Activated CD4-positive, alpha-beta T cell treated with anti-CD3 and anti-CD28 coated beads for 36 hours (primary cell): ENCODE measurements at regions of chr6 and their contacts with region 1.

Region 1: GRCh38 chr6:168895102-168895812 is 358.4 kb downstream of the THBS2 start:
- DNase-seq: peak; percentile 90
- ATAC-seq: peak; percentile 96
- H3K4me3 Mint-ChIP-seq: no peak overlapping the region
- H3K27ac Mint-ChIP-seq: peak overlapping the region; percentile 64
- H3K4me1 Mint-ChIP-seq: peaks cover 10% of the 10 kb centered on the region
- H3K27me3 Mint-ChIP-seq: no peaks in the 10 kb centered on the region

Region 2: GRCh38 chr6:169212897-169213813 is 317.9 kb after region 1 on chr6:
- CTCF ChIA-PET with region 1: no interaction called
- POLR2A ChIA-PET with region 1: no interaction called
- intact Hi-C with region 1: loop called in 1 of 2 experiments (anchors 10 kb)
- DNase-seq: peak; percentile 95
- ATAC-seq: peak; percentile 100
- H3K4me3 Mint-ChIP-seq: peak overlapping the region; percentile 54
- H3K27ac Mint-ChIP-seq: peak overlapping the region; percentile 59
- H3K4me1 Mint-ChIP-seq: peaks cover 16% of the 10 kb centered on the region
- H3K27me3 Mint-ChIP-seq: no peaks in the 10 kb centered on the region

Region 3: GRCh38 chr6:169529931-169530751 is 634.9 kb after region 1 on chr6:
- CTCF ChIA-PET with region 1: no interaction called
- POLR2A ChIA-PET with region 1: no interaction called
- intact Hi-C with region 1: loop called in 1 of 2 experiments (anchors 10 kb)
- DNase-seq: peak; percentile 66
- ATAC-seq: peak; percentile 92
- H3K4me3 Mint-ChIP-seq: no peak overlapping the region
- H3K27ac Mint-ChIP-seq: peak overlapping the region; percentile 61
- H3K4me1 Mint-ChIP-seq: peaks cover 16% of the 10 kb centered on the region
- H3K27me3 Mint-ChIP-seq: no peaks in the 10 kb centered on the region

Region 4: DNA sequence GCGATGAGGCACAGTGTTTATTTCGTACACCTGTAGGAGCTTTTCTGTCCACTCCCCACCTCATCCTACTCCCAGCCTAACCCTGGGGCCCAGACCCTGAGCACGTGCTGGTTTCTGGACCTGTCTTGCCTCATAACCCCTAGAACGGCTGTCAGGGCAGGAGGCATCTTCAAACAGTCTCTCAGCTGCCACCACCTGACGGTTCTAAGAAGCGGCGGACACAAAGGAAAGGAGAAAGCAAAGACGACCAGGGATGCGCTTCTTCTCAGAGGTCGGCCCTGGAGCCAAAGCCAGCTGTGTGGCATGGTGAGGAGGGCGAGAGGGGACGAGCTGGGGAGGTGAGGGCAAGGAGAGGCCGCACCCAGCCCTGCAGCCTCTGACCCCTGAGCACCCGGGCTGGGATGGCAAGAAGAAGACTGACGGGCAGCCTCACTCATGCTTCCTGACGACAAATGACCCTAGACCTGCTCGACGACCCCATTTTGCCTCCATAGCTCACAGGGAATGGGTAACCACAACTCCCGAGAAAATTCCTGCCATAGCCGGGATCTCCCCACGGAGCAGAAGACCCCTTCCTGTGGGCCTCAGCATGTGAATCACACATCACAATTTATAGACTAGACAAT is 744.5 kb after region 1 on chr6:
- CTCF ChIA-PET with region 1: no interaction called
- POLR2A ChIA-PET with region 1: no interaction called
- intact Hi-C with region 1: loop called in 1 of 2 experiments (anchors 5 kb)
- DNase-seq: no peak
- ATAC-seq: no peak
- H3K4me3 Mint-ChIP-seq: no peak overlapping the region
- H3K27ac Mint-ChIP-seq: no peak overlapping the region
- H3K4me1 Mint-ChIP-seq: peaks cover 2% of the 10 kb centered on the region
- H3K27me3 Mint-ChIP-seq: no peaks in the 10 kb centered on the region

Region 5: GRCh38 chr6:169751242-169752073 is 856.2 kb after region 1 on chr6 and contains the starts of genes DYNLT2 and ERMARD:
- CTCF ChIA-PET with region 1: no interaction called
- POLR2A ChIA-PET with region 1: no interaction called
- intact Hi-C with region 1: loop called in 1 of 2 experiments (anchors 10 kb)
- DNase-seq: peak; percentile 96
- ATAC-seq: peak; percentile 96
- H3K4me3 Mint-ChIP-seq: peak within 1 kb of the TSS; percentile 95
- H3K27ac Mint-ChIP-seq: peak within 1 kb of the TSS; percentile 97
- H3K4me1 Mint-ChIP-seq: peaks cover 23% of the 10 kb centered on the region
- H3K27me3 Mint-ChIP-seq: no peaks in the 10 kb centered on the region
- total RNA-seq, gene DYNLT2: 2.0 to 2.4 TPM
- total RNA-seq, gene ERMARD: 19.2 to 30.2 TPM

Region 6: GRCh38 chr6:170529839-170530469 is 1634.7 kb after region 1 on chr6:
- CTCF ChIA-PET with region 1: no interaction called
- POLR2A ChIA-PET with region 1: no interaction called
- intact Hi-C with region 1: loop called in 1 of 2 experiments (anchors 5 kb)
- DNase-seq: peak; percentile 83
- ATAC-seq: peak; percentile 76
- H3K4me3 Mint-ChIP-seq: no peak overlapping the region
- H3K27ac Mint-ChIP-seq: no peak overlapping the region
- H3K4me1 Mint-ChIP-seq: no peaks in the 10 kb centered on the region
- H3K27me3 Mint-ChIP-seq: no peaks in the 10 kb centered on the region